Right lobe of liver (tissue), 6 donors: ENCODE measurements at regions of chr12 and their contacts with region 1.

Region 1: GRCh38 chr12:122197612-122197966 is 5.9 kb upstream of the B3GNT4 start:
- DNase-seq: no peak
- ATAC-seq: no peak
- H3K4me3 ChIP-seq: no peak overlapping the region
- H3K27ac ChIP-seq: no peak overlapping the region
- H3K4me1 ChIP-seq: no peaks in the 10 kb centered on the region
- H3K27me3 ChIP-seq: peaks cover 0 to under 1% of the 10 kb centered on the region in 2 donors
- CTCF ChIP-seq: no peak
- POLR2A ChIP-seq: no peak

Region 2: DNA sequence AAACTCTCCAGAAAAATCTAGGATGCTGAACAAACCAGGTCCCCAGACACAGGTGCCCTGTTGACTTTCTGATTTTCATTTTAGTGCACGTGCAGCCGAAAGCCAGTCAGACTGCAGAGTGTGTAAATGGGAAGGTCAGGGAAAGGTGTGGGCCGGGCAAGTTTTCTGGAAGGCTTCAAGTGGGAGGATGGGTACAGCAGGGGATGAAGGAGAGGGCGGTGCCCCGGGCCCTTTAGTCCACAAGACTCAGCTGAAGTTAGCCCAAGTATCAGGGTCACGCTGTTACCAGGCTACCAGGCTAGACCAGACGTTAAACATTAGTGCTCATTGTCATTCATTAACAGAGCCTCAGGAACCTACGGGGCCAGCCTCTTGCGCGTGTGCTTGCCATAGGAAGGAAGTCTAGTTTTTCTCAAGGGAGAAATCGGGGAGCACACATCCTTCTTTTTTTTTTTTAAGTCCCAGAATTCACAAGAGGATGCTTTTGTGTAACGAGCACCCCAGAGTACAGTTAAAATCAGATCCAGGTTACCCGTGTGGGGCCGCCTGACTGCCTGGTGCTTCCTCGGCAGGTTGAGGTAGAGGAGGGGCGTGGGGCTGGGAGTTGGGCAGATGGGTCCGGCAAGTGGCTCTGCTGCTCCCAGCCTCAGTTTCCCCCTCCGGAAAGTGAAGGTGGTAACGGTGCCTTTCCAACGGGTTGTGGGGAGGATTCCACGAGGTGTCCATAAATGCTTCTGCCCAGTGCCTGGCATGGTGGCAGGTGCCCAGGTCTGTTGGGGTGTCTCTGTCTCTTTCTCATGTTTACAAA is 156.8 kb before region 1 on chr12:
- intact Hi-C with region 1: no loop called
- DNase-seq: peak in 1 of 3 donors; percentile 70
- ATAC-seq: peak; percentile 94 to 98 (median 94)
- H3K4me3 ChIP-seq: no peak overlapping the region
- H3K27ac ChIP-seq: peak overlapping the region in 2 of 3 donors; percentile 11 to 44
- H3K4me1 ChIP-seq: peaks cover 0 to 9% (median 0%) of the 10 kb centered on the region in 4 donors
- H3K27me3 ChIP-seq: no peaks in the 10 kb centered on the region
- CTCF ChIP-seq: no peak
- POLR2A ChIP-seq: no peak

Region 3: GRCh38 chr12:122081697-122082221 is 115.8 kb before region 1 on chr12:
- intact Hi-C with region 1: no loop called
- DNase-seq: peak in 1 of 3 donors; percentile 58
- ATAC-seq: peak; percentile 2 to 16 (median 11)
- H3K4me3 ChIP-seq: peak overlapping the region in 2 of 3 donors; percentile 65 to 88
- H3K27ac ChIP-seq: peak overlapping the region; percentile 43 to 89 (median 79)
- H3K4me1 ChIP-seq: peaks cover 0 to 44% (median 7%) of the 10 kb centered on the region in 4 donors
- H3K27me3 ChIP-seq: no peaks in the 10 kb centered on the region
- CTCF ChIP-seq: no peak
- POLR2A ChIP-seq: no peak

Region 4: GRCh38 chr12:122137681-122138080 is 59.9 kb before region 1 on chr12:
- intact Hi-C with region 1: loop called (anchors 5 to 10 kb)
- DNase-seq: no peak
- ATAC-seq: peak in 2 of 4 donors; percentile 4 to 18
- H3K4me3 ChIP-seq: no peak overlapping the region
- H3K27ac ChIP-seq: no peak overlapping the region
- H3K4me1 ChIP-seq: peaks cover 0 to 7% (median 3%) of the 10 kb centered on the region in 4 donors
- H3K27me3 ChIP-seq: no peaks in the 10 kb centered on the region
- CTCF ChIP-seq: no peak
- POLR2A ChIP-seq: no peak